ENCODE measurements at regions of chr1 and their contacts with region 1.

Region 1: DNA sequence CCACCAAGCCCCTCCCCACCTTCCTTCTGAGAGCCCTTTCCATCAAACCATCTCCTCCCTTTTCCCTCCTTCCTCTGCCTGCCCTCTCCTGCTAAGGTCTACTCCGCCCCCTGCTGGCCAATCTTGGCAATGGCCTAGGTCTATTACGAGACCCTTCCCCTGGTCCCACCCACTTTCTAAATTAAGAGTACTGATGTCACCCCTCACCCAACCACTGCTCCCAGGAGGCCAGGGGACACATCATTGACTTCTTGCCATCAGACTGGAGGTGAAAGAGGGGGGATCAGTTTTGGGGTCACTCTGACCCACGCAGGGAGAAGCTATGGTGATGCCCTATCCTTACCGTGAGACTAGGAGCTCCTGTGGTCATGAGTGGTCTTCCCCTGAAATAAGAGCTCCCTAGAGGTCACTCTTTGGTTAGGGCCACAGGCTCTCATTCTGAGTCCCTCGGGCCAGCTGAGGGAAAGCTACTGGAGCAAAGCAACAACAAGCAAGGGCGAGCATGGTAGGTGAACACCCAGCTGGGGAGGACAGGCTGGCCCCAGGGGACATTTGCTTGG is 34.6 kb upstream of the S100A7 start:
- DNase-seq: peak; percentile 79 to 83
- ATAC-seq: peak; percentile 32 to 85 (median 72)
- H3K4me3 ChIP-seq: no peak overlapping the region
- H3K27ac ChIP-seq: no peak overlapping the region
- H3K4me1 ChIP-seq: peaks cover 0 to 22% (median 15%) of the 10 kb centered on the region in 9 donors
- H3K27me3 ChIP-seq: no peaks in the 10 kb centered on the region
- CTCF ChIP-seq: peak; percentile 91 to 96 (median 94)

Region 2: GRCh38 chr1:153352523-153352922 is 142.5 kb before region 1 on chr1:
- intact Hi-C with region 1: loop called (anchors 1 to 2 kb)
- DNase-seq: peak; percentile 50 to 54
- ATAC-seq: peak in 7 of 8 donors; percentile 62 to 86 (median 81)
- H3K4me3 ChIP-seq: no peak overlapping the region
- H3K27ac ChIP-seq: no peak overlapping the region
- H3K4me1 ChIP-seq: peaks cover 0 to 19% (median 0%) of the 10 kb centered on the region in 9 donors
- H3K27me3 ChIP-seq: peaks cover 0 to 44% (median 24%) of the 10 kb centered on the region in 7 donors
- CTCF ChIP-seq: peak; percentile 78 to 95 (median 93)

Region 3: DNA sequence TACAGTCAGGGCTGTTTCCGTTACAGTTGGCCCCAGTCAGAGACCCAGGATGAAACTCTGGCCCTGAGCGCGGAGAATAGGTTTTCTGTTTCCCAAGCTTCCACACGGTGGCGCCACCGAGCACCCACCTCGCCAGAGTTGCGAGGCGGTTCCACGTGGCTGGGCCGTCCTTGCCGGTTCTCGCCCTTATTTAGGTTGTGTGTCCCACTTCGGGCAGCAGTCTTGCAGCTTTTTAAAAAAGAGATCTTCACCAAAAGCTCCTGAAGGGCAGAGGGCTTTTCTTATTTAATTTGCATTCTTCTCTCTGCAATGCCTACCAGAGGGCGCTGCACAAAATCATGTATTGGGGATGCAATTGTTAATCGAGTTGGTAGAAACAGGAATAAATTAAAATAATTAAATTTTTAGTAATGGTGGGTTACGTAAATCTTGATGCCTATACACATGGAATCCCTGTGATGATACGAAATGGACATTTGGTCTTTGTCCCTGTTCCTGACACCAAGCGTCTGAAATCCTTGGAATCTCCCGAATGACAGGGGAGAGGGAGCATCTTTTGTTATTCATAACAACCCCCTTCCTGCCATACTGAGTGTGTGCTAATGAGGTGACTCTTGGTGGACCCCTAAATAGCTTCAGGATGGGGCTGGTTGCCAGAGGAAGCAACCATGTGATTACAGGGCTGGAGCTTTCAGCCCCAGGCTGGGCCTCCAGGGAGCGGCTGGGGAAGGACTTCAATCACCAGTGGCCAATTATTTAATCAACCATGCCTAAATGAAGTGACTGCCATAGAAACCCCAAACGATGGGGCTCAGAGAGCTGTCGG is 29.0 kb before region 1 on chr1:
- intact Hi-C with region 1: loop called in 2 of 10 experiments (anchors 1 to 2 kb)
- DNase-seq: peak; percentile 22 to 63
- ATAC-seq: peak in 7 of 8 donors; percentile 53 to 83 (median 74)
- H3K4me3 ChIP-seq: no peak overlapping the region
- H3K27ac ChIP-seq: no peak overlapping the region
- H3K4me1 ChIP-seq: peaks cover 0 to 24% (median 15%) of the 10 kb centered on the region in 9 donors
- H3K27me3 ChIP-seq: peaks cover 0 to 4% (median 0%) of the 10 kb centered on the region in 7 donors
- CTCF ChIP-seq: peak; percentile 53 to 85 (median 82)